Psoas muscle (tissue), 8 donors: ENCODE measurements at regions of chr10 and their contacts with region 1.

Region 1: DNA sequence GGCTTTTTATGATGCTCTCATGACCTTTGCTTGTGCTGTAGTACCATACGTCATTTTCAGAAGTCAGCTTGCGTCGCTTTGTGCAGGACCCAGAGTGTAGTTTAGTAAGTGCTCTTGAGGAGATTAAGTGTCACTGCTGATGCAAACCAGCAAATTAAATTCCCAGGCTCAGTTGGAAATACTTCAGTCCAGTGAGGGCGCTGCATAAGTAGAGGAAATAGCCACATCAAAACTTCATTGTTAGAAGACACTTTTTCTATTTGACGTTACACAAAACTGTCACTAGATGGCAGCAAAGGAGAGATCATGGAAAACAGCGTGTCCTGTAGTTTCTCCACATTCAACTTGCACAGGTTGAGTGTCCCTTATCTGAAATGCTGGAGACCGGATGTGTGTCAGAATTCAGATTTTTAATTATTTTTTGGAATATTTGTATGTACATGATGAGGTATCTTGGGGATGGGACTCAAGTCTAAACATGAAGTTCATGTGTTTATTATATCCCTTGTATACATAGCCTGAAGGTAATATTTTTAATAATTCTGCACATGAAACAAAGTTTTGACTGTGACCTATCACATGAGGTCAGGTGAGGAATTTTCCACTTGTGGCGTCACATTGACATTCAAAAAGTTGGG is 7.9 kb downstream of the ZNF22 start:
- DNase-seq: no peak
- ATAC-seq: peak; percentile 65 to 87 (median 78)
- H3K4me3 ChIP-seq: no peak overlapping the region
- H3K27ac ChIP-seq: no peak overlapping the region
- H3K4me1 ChIP-seq: peaks cover 5% of the 10 kb centered on the region
- H3K27me3 ChIP-seq: no peaks in the 10 kb centered on the region
- CTCF ChIP-seq: peak; percentile 82

Region 2: GRCh38 chr10:45040921-45041542 is 32.4 kb after region 1 on chr10:
- intact Hi-C with region 1: no loop called
- DNase-seq: no peak
- ATAC-seq: no peak
- H3K4me3 ChIP-seq: no peak overlapping the region
- H3K27ac ChIP-seq: no peak overlapping the region
- H3K4me1 ChIP-seq: no peaks in the 10 kb centered on the region
- H3K27me3 ChIP-seq: no peaks in the 10 kb centered on the region
- CTCF ChIP-seq: no peak

Region 3: GRCh38 chr10:45235798-45236231 is 227.2 kb after region 1 on chr10:
- intact Hi-C with region 1: loop called in 1 of 2 experiments (anchors 5 kb)
- DNase-seq: no peak
- ATAC-seq: no peak
- H3K4me3 ChIP-seq: no peak overlapping the region
- H3K27ac ChIP-seq: no peak overlapping the region
- H3K4me1 ChIP-seq: no peaks in the 10 kb centered on the region
- H3K27me3 ChIP-seq: peaks cover 0 to 3% (median 0%) of the 10 kb centered on the region in 3 donors
- CTCF ChIP-seq: no peak